ENCODE measurements at regions of chr1 and their contacts with region 1.

Region 1: DNA sequence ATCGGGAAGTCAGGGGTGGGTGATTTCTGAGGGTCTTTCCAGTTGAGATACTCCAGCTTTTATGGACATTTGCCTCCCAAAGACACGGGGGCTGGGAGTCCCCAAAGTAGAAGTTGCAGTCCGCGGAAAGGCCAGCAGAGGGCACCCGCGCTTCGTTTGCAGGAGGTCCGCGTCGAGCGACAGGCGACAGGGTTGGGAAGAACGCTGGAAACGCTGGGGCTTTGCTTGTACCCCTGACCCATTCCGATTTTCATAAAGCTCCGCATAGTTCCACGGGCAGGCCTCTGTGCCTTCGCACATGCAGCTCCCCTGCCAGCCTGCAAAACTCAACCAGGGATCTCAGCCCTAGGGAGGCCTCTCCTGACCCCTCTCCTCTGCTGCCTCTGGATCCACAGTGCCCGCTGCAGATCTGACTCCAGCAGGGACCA is 44.2 kb upstream of the LAPTM5 start:
- DNase-seq: no peak
- ATAC-seq: peak; percentile 86
- H3K4me3 ChIP-seq: peak overlapping the region in 1 of 2 experiments; percentile 36; a peak in 2 of 4 replicates
- H3K27ac ChIP-seq: no peak overlapping the region
- H3K4me1 ChIP-seq: no peaks in the 10 kb centered on the region
- H3K27me3 ChIP-seq: no peaks in the 10 kb centered on the region
- CTCF ChIP-seq: peak; percentile 98

Region 2: DNA sequence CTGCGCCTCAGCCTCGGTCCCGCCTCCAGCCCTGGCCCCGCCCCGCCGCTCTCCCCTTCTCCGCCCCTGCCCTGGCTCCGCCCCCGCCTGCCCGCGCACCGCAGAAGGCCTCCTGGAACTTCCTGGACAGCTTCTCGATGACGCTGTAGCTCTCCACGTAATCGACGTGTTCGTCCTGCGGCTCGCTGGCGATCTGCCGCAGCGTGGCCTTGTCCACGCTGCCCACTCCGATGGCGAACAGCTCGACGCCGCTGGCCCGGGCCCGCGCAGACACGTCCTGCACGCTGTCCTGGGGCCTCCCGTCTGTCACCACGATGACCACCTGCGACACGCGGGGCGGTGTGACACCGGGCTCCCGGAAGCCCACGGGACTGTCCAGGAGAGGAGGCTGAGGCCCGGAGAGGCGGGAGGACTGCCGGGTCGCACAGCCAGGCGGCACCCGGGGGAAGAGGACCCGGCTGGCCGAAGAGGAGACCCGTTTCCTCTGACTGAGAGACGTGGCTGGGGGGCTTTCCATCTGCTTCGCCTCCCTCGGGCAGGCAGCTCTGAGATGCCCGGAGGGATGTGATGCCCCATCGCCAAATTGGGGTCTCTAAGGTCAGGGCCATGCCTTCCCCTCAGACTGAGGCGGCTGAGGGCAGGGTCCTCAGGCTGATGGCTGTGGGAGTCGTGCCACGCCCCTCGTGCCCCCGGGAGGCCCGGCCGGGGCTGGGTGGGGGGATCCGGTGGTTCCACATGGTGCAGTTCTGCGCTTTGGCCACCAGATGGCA is 83.0 kb before region 1 on chr1:
- CTCF ChIA-PET with region 1: no interaction called
- POLR2A ChIA-PET with region 1: no interaction called
- in situ Hi-C with region 1: no loop called
- intact Hi-C with region 1: no loop called
- DNase-seq: no peak
- ATAC-seq: peak; percentile 84
- H3K4me3 ChIP-seq: peak overlapping the region; percentile 71 to 80
- H3K27ac ChIP-seq: peak overlapping the region; percentile 86
- H3K4me1 ChIP-seq: peaks cover 7% of the 10 kb centered on the region; the same call in 1 of the 2 replicates
- H3K27me3 ChIP-seq: no peaks in the 10 kb centered on the region
- CTCF ChIP-seq: peak; percentile 92

Region 3: DNA sequence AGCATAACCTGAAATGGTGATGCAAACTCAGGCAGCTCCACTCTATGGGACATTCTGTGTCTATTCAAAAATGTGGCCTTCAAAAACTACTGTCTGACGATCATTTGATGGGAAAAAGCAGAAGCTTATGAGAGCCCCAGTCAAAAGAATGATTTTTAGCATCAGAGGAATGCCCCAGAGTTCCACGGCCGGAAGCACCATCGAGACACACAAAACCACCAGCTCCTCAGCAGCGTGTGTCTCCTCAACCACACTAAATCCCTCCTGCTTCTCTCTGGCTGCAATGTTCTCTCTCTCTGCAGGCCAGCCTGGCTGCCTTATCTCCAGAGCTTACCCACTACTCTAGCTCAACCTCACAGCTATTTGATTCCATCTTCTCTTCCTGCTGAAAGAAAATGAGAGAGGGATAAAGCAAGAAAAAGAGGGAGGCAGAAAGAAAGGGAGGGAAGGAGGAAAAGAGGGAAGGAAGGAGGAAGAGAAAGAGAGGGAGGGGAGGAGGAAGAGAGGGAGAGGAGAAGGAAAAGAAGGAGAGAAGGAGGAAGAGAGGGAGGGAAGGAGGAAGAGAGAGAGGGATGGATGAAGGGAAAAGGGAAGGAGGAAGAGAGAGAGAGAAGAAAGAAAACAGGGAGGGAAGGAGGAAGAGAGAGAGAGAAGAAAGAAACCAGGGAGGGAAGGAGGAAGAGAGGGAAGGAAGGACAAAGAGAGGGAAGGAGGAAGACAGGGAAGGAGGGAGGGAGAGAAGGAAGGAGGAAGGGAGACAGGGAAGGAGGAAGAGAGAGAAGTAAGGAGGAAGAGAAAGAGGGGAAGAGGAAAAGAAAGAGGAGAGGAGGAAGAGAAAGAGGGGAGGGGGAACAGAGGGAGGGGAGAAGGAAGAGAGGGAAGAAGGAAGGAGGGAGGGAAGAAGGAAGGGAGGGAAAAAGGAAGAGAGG is 10.7 kb before region 1 on chr1:
- CTCF ChIA-PET with region 1: interaction called, 13 read pairs
- POLR2A ChIA-PET with region 1: no interaction called
- in situ Hi-C with region 1: no loop called
- intact Hi-C with region 1: no loop called
- DNase-seq: no peak
- ATAC-seq: no peak
- H3K4me3 ChIP-seq: no peak overlapping the region
- H3K27ac ChIP-seq: no peak overlapping the region
- H3K4me1 ChIP-seq: no peaks in the 10 kb centered on the region
- H3K27me3 ChIP-seq: peaks cover 6% of the 10 kb centered on the region
- CTCF ChIP-seq: no peak

Region 4: GRCh38 chr1:31084782-31085569 is 283.2 kb after region 1 on chr1:
- CTCF ChIA-PET with region 1: no interaction called
- POLR2A ChIA-PET with region 1: no interaction called
- in situ Hi-C with region 1: no loop called
- intact Hi-C with region 1: no loop called
- DNase-seq: no peak
- ATAC-seq: no peak
- H3K4me3 ChIP-seq: no peak overlapping the region
- H3K27ac ChIP-seq: no peak overlapping the region
- H3K4me1 ChIP-seq: no peaks in the 10 kb centered on the region
- H3K27me3 ChIP-seq: no peaks in the 10 kb centered on the region
- CTCF ChIP-seq: no peak